Prostate gland (tissue), 2 donors: ENCODE measurements at regions of chr10 and their contacts with region 1.

Region 1: GRCh38 chr10:5078547-5079180 is 15.6 kb upstream of the AKR1C3 start:
- DNase-seq: no peak
- H3K4me3 ChIP-seq: no peak overlapping the region
- H3K27ac ChIP-seq: no peak overlapping the region
- H3K4me1 ChIP-seq: no peaks in the 10 kb centered on the region
- H3K27me3 ChIP-seq: peaks cover 2% of the 10 kb centered on the region
- CTCF ChIP-seq: no peak
- POLR2A ChIP-seq: no peak

Region 2: DNA sequence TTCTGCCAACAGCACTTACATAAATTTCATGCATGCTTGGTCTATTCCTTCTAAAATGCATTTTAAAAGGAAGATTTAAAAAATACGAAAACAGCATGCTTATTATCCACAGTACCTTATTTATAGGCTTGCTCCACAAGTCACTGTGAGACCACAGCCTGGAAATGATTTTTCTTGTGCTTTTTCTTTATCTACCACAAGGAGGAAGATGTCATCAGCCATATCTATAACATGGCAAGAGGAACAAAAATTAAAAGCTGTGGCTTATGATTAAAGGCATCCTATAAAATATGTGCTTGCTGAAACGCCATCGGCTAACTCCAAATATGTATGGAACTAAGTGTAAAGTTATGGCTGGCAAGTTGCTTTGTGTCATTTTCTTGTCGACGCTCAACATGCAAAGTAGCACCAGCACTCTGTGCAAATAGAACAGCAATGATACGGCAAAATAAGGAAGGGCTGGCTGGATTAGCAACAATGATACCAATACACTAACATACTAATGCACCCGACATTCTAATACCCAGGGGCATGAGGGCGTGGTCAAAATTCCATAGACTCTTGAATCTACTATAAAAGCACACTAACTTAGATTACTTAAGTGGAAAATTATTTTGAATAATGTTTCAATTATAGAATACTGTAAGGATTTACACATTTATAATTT is 293.9 kb before region 1 on chr10:
- intact Hi-C with region 1: no loop called
- DNase-seq: no peak
- H3K4me3 ChIP-seq: no peak overlapping the region
- H3K27ac ChIP-seq: no peak overlapping the region
- H3K4me1 ChIP-seq: no peaks in the 10 kb centered on the region
- H3K27me3 ChIP-seq: no peaks in the 10 kb centered on the region
- CTCF ChIP-seq: no peak
- POLR2A ChIP-seq: no peak

Region 3: GRCh38 chr10:5043716-5044115 is 34.9 kb before region 1 on chr10:
- intact Hi-C with region 1: loop called (anchors 5 kb)
- DNase-seq: peak; percentile 84
- H3K4me3 ChIP-seq: no peak overlapping the region
- H3K27ac ChIP-seq: no peak overlapping the region
- H3K4me1 ChIP-seq: no peaks in the 10 kb centered on the region
- H3K27me3 ChIP-seq: peaks cover 2% of the 10 kb centered on the region
- CTCF ChIP-seq: no peak
- POLR2A ChIP-seq: no peak